B cell (primary cell): ENCODE measurements at regions of chr11 and their contacts with region 1.

Region 1: DNA sequence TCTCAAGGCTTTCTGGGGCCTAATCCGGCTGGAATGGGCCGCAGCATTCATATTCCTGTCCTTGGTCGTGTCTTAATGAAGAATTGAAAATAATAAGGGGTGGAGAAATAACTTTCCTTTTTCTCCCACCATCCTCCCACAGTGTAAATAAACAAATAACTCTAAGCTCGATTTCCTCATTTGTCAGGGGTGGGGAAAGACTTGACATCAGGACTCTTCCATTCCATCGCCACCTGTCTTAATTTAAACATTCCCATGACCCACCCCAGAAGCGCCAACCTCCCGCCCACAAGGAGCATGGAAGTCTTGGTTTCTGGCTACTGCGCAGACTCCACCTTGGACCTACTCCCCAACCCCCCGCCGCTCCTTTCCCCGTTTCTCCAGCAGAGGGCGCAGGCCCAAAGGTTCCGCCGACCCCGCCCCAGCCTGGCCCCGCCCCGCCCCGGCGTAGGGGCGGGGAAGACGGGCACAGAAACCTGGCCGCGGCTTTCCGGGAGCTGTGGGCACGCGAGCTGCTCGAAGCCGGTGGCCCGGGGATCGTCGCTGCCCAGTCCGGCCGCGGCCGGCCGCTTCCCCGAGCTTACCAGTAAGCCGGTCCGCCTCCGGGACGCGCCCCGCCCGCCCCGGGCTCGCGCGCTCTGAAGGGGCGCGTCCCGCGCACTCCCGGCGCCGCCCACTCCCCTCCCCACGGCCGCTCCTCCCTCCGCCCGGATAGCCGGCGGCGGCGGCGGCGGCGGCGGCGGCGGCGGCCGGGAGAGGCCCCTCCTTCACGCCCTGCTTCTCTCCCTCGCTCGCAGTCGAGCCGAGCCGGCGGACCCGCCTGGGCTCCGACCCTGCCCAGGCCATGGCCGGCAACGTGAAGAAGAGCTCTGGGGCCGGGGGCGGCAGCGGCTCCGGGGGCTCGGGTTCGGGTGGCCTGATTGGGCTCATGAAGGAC is at the start of gene CBL:
- DNase-seq: peak; percentile 96
- ATAC-seq: peak; percentile 88
- H3K4me3 ChIP-seq: peak within 1 kb of the TSS; percentile 93 to 98 (median 96)
- H3K4me3 Mint-ChIP-seq: peak within 1 kb of the TSS; percentile 97
- H3K27ac ChIP-seq: peak within 1 kb of the TSS; percentile 60 to 84
- H3K27ac Mint-ChIP-seq: peak within 1 kb of the TSS; percentile 94
- H3K4me1 ChIP-seq: peaks cover 18 to 20% of the 10 kb centered on the region in 2 donors
- H3K4me1 Mint-ChIP-seq: peaks cover 33% of the 10 kb centered on the region
- H3K27me3 ChIP-seq: no peaks in the 10 kb centered on the region
- H3K27me3 Mint-ChIP-seq: no peaks in the 10 kb centered on the region
- CTCF ChIP-seq: peak; percentile 78
- total RNA-seq, gene CBL: 35.2 and 38.7 TPM in 2 replicates

Region 2: GRCh38 chr11:119168471-119169281 is 37.2 kb before region 1 on chr11 and contains the start of gene NLRX1:
- CTCF ChIA-PET with region 1: interaction called, 12 read pairs
- POLR2A ChIA-PET with region 1: no interaction called
- intact Hi-C with region 1: loop called (anchors 2 kb)
- DNase-seq: peak; percentile 88
- ATAC-seq: peak; percentile 96
- H3K4me3 ChIP-seq: peak within 1 kb of the TSS; percentile 56 to 80 (median 68)
- H3K4me3 Mint-ChIP-seq: peak within 1 kb of the TSS; percentile 92
- H3K27ac ChIP-seq: peak within 1 kb of the TSS; percentile 10 to 65
- H3K27ac Mint-ChIP-seq: peak within 1 kb of the TSS; percentile 81
- H3K4me1 ChIP-seq: peaks cover 5 to 12% of the 10 kb centered on the region in 2 donors
- H3K4me1 Mint-ChIP-seq: peaks cover 4% of the 10 kb centered on the region
- H3K27me3 ChIP-seq: no peaks in the 10 kb centered on the region
- H3K27me3 Mint-ChIP-seq: no peaks in the 10 kb centered on the region
- CTCF ChIP-seq: peak; percentile 88
- total RNA-seq, gene NLRX1: 9.6 and 10.4 TPM in 2 replicates

Region 3: GRCh38 chr11:119262668-119263351 is 57.0 kb after region 1 on chr11:
- CTCF ChIA-PET with region 1: interaction called, 7 read pairs
- POLR2A ChIA-PET with region 1: no interaction called
- intact Hi-C with region 1: loop called (anchors 2 kb)
- DNase-seq: no peak
- ATAC-seq: no peak
- H3K4me3 ChIP-seq: no peak overlapping the region
- H3K4me3 Mint-ChIP-seq: no peak overlapping the region
- H3K27ac ChIP-seq: peak overlapping the region in 1 of 2 donors; percentile 3
- H3K27ac Mint-ChIP-seq: no peak overlapping the region
- H3K4me1 ChIP-seq: peaks cover 57 to 75% of the 10 kb centered on the region in 2 donors
- H3K4me1 Mint-ChIP-seq: peaks cover 51% of the 10 kb centered on the region
- H3K27me3 ChIP-seq: no peaks in the 10 kb centered on the region
- H3K27me3 Mint-ChIP-seq: no peaks in the 10 kb centered on the region
- CTCF ChIP-seq: no peak